ENCODE measurements at regions of chr1 and their contacts with region 1.

Region 1: DNA sequence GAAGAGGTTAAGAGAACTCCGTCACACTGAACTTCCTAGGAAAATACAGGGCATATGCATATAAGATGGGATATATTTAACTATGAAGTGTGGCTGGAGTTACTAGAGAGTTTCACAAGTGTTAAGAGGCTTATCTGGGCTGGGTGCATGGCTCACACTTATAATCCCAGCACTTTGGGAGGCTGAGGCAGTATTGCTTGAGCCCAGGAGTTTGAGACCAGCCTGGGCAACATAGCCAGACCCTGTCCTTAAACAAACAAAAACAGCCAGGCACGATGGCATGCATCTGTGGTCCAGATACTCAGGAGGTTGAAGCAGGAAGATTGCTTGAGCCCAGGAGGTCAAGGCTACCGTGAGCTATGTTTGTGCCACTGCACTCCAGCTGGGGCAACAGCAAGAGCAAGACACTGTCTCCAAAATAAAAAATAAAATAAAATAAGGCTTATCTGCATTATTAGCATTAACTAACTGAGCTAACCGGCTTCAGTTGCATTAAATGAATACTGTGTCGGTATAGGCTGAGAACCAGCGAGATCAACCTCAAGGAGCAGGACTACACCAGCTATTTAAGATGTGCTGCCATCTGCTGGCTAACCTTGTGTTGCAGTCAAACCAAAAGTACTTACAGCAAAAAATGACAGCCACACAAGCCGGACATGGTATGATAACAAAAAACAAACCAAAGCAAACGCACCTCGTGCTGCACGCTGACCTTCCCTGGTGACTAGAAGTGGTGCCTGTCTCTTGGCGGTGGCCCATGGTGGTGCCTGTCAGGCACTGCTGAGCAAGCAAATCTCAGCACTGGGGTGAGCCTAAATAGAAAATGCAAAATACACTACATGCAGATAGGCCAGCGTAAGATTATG is 19.7 kb upstream of the RBBP5 start:
- DNase-seq: peak; percentile 47
- ATAC-seq: peak; percentile 79
- H3K4me3 Mint-ChIP-seq: no peak overlapping the region
- H3K27ac Mint-ChIP-seq: peak overlapping the region; percentile 57
- H3K4me1 Mint-ChIP-seq: peaks cover 27% of the 10 kb centered on the region
- H3K27me3 Mint-ChIP-seq: no peaks in the 10 kb centered on the region
- CTCF ChIP-seq: peak; percentile 24

Region 2: DNA sequence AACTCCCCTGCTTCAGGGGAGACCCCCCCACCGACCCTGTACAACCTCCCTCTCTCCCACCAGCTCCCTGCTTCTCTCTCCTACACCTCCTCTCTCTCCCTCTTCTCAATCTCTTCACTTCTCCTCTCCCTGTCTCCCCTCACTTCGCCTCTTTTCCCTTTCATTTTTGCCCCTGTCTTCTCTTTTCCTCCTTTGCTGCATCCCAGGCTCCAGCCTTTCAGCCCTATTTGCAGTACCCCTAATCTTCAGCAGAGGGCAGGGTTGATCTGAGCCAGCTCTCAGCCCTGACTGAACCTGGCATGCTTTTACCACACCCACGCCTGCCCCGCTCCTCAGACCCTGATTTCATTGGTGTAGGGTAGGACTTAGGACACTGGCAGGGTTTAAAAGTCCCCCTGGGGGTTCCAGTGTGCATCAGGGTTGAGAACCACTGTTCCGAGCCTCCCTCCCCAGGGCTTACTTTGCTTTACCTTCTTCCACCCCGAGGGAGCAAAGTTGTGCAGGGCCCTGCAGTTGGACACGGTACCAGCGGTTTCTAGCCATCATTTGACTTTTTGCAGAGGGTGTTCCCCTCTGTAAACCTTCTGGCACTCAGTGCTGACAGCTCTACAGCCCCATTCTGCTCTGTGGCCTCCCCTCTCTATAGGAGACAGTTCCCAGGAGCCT is 165.8 kb before region 1 on chr1:
- CTCF ChIA-PET with region 1: interaction called, 17 read pairs
- POLR2A ChIA-PET with region 1: no interaction called
- intact Hi-C with region 1: loop called (anchors 1 kb)
- DNase-seq: peak; percentile 38
- ATAC-seq: peak; percentile 90
- H3K4me3 Mint-ChIP-seq: no peak overlapping the region
- H3K27ac Mint-ChIP-seq: no peak overlapping the region
- H3K4me1 Mint-ChIP-seq: peaks cover 11% of the 10 kb centered on the region
- H3K27me3 Mint-ChIP-seq: peaks cover 24% of the 10 kb centered on the region
- CTCF ChIP-seq: no peak

Region 3: DNA sequence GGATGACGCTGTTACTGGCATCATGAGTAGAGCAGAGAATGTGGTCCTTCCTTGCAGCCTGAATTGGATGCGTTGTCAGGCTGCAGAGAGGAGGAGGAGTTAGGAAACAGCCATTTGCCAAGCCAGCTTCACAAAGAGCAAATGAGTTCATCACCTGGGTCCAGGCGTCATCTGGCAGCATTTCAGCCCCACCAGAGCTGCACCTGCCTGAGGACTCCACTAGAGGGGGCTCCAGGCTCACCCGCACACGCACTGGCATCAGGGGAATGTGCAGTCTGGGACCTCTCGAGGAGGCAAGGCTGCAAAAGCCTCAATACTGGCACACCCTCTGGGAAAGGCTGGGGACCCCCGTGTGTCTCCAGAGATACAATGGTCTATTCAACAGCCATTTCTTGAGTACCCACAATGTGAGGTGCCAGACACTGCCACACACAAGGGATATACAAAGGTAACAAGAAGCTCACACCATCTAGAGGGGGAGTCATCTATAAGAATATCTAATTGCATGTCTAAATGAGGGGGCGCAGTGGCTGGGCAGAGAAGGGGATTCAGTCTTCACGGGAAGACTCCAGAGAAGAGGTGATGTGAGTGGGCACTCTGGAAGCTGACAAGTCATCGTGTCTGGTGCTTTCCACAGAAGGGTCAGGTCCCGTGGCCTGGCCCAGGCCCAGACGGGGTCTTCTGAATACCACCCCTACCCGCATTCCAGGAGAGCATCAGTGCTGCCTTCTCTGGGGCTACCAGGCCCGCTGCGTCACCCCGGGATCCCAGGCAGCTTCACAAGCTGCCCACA is 152.0 kb before region 1 on chr1:
- CTCF ChIA-PET with region 1: interaction called, 7 read pairs
- POLR2A ChIA-PET with region 1: no interaction called
- intact Hi-C with region 1: loop called (anchors 1 kb)
- DNase-seq: peak; percentile 34
- ATAC-seq: peak; percentile 78
- H3K4me3 Mint-ChIP-seq: no peak overlapping the region
- H3K27ac Mint-ChIP-seq: no peak overlapping the region
- H3K4me1 Mint-ChIP-seq: peaks cover 17% of the 10 kb centered on the region
- H3K27me3 Mint-ChIP-seq: peaks cover 7% of the 10 kb centered on the region
- CTCF ChIP-seq: no peak

Region 4: DNA sequence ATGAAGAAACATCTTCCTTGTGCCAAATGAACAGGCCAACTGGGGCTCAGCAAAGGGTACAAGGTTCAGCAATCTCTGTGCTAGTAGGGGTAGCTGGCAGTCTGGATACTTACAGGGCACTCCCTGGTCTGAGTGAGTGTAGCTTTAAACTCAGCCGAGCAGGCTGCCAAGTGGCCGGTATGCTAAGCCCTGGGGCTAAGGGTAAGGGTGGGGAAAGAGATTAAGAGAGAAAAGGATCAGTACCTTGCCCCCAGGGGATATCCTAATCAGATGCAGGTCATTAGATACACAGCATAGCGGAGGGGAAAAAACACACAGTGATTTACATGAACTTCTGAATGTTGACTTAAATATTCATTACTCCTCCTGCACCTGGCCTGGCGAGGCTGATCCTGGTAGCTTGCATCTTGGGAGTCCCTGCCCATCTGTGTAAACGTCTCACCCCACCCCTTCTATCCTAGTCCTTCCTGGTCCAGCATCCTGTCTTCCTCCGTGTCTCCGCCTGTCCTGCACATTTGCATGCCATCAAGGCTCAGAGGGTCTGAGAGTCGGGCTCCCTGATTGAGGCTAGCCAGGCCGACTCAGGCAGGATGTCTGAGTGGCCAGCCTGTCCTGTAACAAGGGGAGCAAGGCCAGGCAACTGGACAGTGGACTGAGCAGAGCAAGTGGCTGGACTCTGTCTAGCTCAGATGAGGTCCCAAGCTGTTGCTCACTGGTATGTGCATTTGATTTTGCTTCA is 137.9 kb before region 1 on chr1:
- CTCF ChIA-PET with region 1: no interaction called
- POLR2A ChIA-PET with region 1: no interaction called
- intact Hi-C with region 1: no loop called
- DNase-seq: no peak
- ATAC-seq: no peak
- H3K4me3 Mint-ChIP-seq: no peak overlapping the region
- H3K27ac Mint-ChIP-seq: no peak overlapping the region
- H3K4me1 Mint-ChIP-seq: no peaks in the 10 kb centered on the region
- H3K27me3 Mint-ChIP-seq: peaks cover 10% of the 10 kb centered on the region
- CTCF ChIP-seq: no peak

Region 5: DNA sequence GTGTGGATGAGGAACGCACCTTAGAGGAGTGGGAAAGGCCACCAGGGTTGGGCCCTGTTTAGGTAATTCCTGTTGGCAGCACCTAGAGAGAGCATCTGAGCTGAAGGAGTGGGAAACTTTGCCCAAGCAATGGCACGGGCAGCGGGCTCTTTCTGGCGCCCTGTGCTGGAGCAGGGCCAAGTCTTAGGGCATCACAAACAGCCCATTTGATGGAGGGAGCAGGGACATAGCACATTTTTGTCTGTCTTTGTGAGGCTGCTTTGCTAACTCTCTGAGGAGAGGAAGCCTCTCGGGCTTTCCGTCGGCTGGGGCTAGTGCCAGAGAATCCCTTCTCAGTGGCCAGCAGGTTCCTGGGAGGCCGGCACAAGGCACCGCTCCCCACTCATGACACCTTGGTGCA is 121.0 kb before region 1 on chr1:
- CTCF ChIA-PET with region 1: no interaction called
- POLR2A ChIA-PET with region 1: no interaction called
- intact Hi-C with region 1: no loop called
- DNase-seq: no peak
- ATAC-seq: no peak
- H3K4me3 Mint-ChIP-seq: no peak overlapping the region
- H3K27ac Mint-ChIP-seq: no peak overlapping the region
- H3K4me1 Mint-ChIP-seq: no peaks in the 10 kb centered on the region
- H3K27me3 Mint-ChIP-seq: peaks cover 11% of the 10 kb centered on the region
- CTCF ChIP-seq: no peak

Region 6: GRCh38 chr1:205061665-205062069 is 79.8 kb before region 1 on chr1:
- CTCF ChIA-PET with region 1: interaction called, 13 read pairs
- POLR2A ChIA-PET with region 1: no interaction called
- intact Hi-C with region 1: loop called (anchors 1 kb)
- DNase-seq: peak; percentile 53
- ATAC-seq: peak; percentile 61
- H3K4me3 Mint-ChIP-seq: peak overlapping the region; percentile 15
- H3K27ac Mint-ChIP-seq: no peak overlapping the region
- H3K4me1 Mint-ChIP-seq: no peaks in the 10 kb centered on the region
- H3K27me3 Mint-ChIP-seq: no peaks in the 10 kb centered on the region
- CTCF ChIP-seq: peak; percentile 51

Region 7: GRCh38 chr1:205077158-205077933 is 64.1 kb before region 1 on chr1:
- CTCF ChIA-PET with region 1: no interaction called
- POLR2A ChIA-PET with region 1: no interaction called
- intact Hi-C with region 1: no loop called
- DNase-seq: no peak
- ATAC-seq: no peak
- H3K4me3 Mint-ChIP-seq: no peak overlapping the region
- H3K27ac Mint-ChIP-seq: no peak overlapping the region
- H3K4me1 Mint-ChIP-seq: no peaks in the 10 kb centered on the region
- H3K27me3 Mint-ChIP-seq: no peaks in the 10 kb centered on the region
- CTCF ChIP-seq: no peak

Region 8: GRCh38 chr1:205108464-205108863 is 33.0 kb before region 1 on chr1:
- CTCF ChIA-PET with region 1: interaction called, 5 read pairs
- POLR2A ChIA-PET with region 1: no interaction called
- intact Hi-C with region 1: loop called (anchors 5 kb)
- DNase-seq: no peak
- ATAC-seq: no peak
- H3K4me3 Mint-ChIP-seq: no peak overlapping the region
- H3K27ac Mint-ChIP-seq: no peak overlapping the region
- H3K4me1 Mint-ChIP-seq: peaks cover 21% of the 10 kb centered on the region
- H3K27me3 Mint-ChIP-seq: no peaks in the 10 kb centered on the region
- CTCF ChIP-seq: no peak

Measured in activated B cell treated with CpG ODN at 0.5 μM for 24 hours (primary cell).